ENCODE measurements at regions of chr19 and their contacts with region 1.

Region 1: DNA sequence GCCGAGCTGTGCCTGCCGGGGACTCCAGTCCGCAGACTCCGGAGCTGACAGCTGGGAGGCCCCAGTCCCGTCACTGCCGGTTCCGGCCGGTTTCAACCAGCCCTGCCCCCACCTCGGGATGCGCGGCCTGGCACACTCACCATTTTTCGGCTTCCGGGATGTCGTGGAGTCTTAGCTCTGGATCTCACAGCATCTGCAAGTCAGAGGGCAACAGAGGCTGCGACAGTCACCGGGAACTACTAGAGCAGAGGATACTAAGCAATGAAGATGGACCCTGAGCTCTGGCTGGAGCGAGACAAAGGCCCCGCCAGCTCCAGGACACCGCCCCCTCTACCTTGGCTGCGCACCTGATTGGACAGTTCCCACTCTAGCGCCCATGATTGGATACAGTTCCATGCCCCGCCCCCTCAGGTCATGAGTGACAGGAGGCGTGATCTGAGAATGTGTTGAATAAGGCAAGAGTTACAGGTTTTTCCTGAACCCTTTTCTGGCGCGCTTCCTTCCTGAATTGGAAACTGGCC is at the start of gene ZNF682:
- DNase-seq: peak; percentile 99
- H3K4me3 ChIP-seq: peak within 1 kb of the TSS; percentile 68 to 80 (median 74)
- H3K27ac ChIP-seq: peak within 1 kb of the TSS; percentile 75 to 82 (median 78)
- H3K4me1 ChIP-seq: peaks cover 9 to 21% (median 12%) of the 10 kb centered on the region in 4 donors
- H3K27me3 ChIP-seq: peaks cover 0 to 11% (median 0%) of the 10 kb centered on the region in 4 donors
- CTCF ChIP-seq: no peak
- EP300 ChIP-seq: no peak
- POLR2A ChIP-seq: no peak
- total RNA-seq, gene ZNF682: 1.4 to 3.7 (median 2.5) TPM

Region 2: DNA sequence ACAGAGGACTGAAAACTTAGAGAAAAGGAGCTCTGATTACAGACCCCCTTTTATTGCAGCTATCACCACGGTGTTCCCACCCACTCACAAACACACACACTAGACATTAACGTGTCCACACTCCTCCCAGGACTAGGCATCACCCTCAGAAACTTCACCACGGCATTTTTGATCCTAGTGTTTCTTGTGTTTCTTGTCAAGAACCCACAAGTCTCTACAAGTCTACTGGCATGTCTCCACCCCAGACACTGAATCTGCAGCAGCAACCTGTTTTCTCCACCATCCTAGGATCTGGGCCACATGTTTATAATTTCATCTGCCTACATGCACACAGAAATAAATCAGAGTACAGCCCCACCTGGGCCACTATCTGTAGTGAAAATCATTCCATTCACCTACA is 132.0 kb after region 1 on chr19:
- intact Hi-C with region 1: loop called (anchors 5 kb)
- DNase-seq: no peak
- H3K4me3 ChIP-seq: no peak overlapping the region
- H3K27ac ChIP-seq: no peak overlapping the region
- H3K4me1 ChIP-seq: peaks cover 7 to 16% (median 8%) of the 10 kb centered on the region in 4 donors
- H3K27me3 ChIP-seq: no peaks in the 10 kb centered on the region
- CTCF ChIP-seq: no peak
- EP300 ChIP-seq: no peak
- POLR2A ChIP-seq: no peak

Measured in esophagus muscularis mucosa (tissue), 4 donors.